ENCODE measurements at regions of chr5 and their contacts with region 1.

Region 1: DNA sequence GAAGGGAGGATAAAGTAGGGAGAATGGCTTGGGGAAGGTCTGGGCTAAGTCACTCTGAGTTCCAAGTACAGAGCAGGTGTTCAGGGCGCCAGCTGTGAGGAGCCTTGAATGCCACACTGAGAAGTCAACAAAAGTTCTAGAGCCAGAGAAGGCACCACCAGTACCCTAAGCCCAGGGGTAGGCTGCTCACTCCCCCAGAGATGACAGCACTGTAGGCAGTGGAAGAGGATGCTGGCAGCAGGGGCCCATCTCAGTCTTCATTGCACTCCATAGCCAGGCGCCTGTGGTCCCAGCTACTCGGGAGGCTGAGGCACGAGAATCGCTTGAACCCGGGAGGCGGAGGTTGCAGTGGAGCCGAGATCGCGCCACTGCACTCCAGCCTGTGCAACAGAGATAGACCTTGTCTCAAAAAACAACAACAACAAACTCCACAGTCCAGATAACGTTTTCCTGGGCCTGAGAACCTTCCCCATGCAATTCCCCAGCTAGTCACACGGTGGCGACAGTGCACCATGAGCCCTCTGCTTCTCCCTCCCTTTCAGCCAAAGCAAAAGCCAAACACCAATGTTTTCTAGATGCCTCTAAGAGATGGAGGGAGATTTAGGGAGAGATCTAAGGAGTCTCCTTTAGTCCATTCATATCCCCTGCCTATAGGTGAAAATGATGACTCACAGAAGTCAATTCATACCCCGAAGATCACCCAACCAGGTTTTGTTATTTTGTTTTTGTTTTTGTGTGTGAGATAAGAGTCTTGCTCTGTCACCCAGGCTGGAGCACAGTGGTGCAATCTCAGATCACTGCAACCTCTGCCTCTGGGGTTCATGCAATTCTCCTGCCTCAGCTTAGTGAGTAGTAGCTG is 19.8 kb upstream of the NSD1 start:
- H3K4me3 Mint-ChIP-seq: peak overlapping the region; percentile 70
- H3K27ac Mint-ChIP-seq: peak overlapping the region; percentile 84
- H3K4me1 Mint-ChIP-seq: peaks cover 38% of the 10 kb centered on the region
- H3K27me3 Mint-ChIP-seq: peaks cover 2% of the 10 kb centered on the region

Region 2: DNA sequence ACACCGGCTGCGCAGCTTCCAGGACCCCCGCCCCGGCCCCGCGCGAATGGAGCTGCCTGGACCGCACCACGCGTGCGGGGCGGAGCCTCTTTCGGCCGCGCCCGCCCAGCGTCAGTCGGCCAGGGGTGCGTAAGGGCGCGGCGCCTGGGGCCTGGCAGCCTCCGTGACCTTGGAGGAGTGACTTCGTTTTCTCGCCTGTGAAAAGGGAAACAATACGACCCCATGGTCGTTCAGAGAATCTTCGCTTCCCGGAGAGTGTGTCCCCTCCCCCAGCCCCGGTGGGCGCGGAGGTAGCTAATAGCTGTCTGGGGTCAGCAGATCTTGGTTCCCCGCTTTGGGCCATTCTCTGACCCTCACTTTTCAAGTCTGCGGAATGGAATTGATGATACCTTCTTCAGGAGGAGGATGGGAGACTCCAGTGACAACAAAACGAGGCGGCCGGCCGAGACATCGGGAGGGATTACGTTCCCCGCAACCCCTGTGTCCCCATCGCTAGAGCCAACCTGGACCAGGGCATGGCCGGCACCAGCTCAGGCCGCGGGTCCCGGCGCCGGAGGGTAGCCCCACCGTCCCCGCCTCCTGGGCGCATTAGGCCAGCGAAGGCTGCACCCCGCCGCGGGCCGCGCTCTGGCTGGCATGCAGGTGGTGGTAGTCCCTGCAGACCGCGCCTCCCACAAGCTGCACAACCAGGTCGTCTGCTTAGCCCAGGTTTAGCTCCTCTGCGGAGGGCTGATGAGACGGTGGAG is 570.2 kb before region 1 on chr5:
- intact Hi-C with region 1: no loop called
- H3K4me3 Mint-ChIP-seq: peak overlapping the region; percentile 84
- H3K27ac Mint-ChIP-seq: peak overlapping the region; percentile 94
- H3K4me1 Mint-ChIP-seq: peaks cover 58% of the 10 kb centered on the region
- H3K27me3 Mint-ChIP-seq: no peaks in the 10 kb centered on the region

Region 3: GRCh38 chr5:176660860-176661641 is 452.7 kb before region 1 on chr5:
- intact Hi-C with region 1: loop called (anchors 5 kb)
- H3K4me3 Mint-ChIP-seq: no peak overlapping the region
- H3K27ac Mint-ChIP-seq: no peak overlapping the region
- H3K4me1 Mint-ChIP-seq: peaks cover 23% of the 10 kb centered on the region
- H3K27me3 Mint-ChIP-seq: peaks cover 47% of the 10 kb centered on the region

Region 4: DNA sequence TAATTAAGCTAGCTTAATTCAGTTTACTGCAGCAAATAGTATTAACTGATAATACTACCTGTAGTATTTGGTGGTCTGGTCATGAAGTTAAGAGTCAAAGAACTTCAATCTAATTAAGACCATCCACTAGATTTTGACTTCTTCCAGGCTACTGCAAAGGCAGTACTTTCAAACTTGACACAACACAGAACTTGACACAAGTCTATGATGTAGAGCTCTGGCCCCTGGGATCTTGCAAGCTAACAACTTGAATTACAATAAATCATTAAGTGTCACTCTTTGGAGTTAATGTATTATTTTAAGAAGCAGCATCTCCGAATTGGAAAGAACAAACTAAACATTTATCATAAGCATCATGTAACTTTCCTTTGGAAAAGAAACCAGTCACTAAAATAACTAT is 148.2 kb before region 1 on chr5:
- intact Hi-C with region 1: no loop called
- H3K4me3 Mint-ChIP-seq: no peak overlapping the region
- H3K27ac Mint-ChIP-seq: no peak overlapping the region
- H3K4me1 Mint-ChIP-seq: peaks cover 3% of the 10 kb centered on the region
- H3K27me3 Mint-ChIP-seq: no peaks in the 10 kb centered on the region

Region 5: GRCh38 chr5:177133091-177133852 is 19.5 kb after region 1 on chr5 and contains the start of gene NSD1:
- intact Hi-C with region 1: loop called (anchors 2 kb)
- H3K4me3 Mint-ChIP-seq: peak within 1 kb of the TSS; percentile 81
- H3K27ac Mint-ChIP-seq: peak within 1 kb of the TSS; percentile 92
- H3K4me1 Mint-ChIP-seq: peaks cover 58% of the 10 kb centered on the region
- H3K27me3 Mint-ChIP-seq: peaks cover 5% of the 10 kb centered on the region

Region 6: GRCh38 chr5:177249761-177250526 is 136.1 kb after region 1 on chr5:
- intact Hi-C with region 1: loop called (anchors 10 kb)
- H3K4me3 Mint-ChIP-seq: no peak overlapping the region
- H3K27ac Mint-ChIP-seq: no peak overlapping the region
- H3K4me1 Mint-ChIP-seq: no peaks in the 10 kb centered on the region
- H3K27me3 Mint-ChIP-seq: no peaks in the 10 kb centered on the region

Region 7: GRCh38 chr5:177546258-177546741 is 432.5 kb after region 1 on chr5:
- intact Hi-C with region 1: no loop called
- H3K4me3 Mint-ChIP-seq: no peak overlapping the region
- H3K27ac Mint-ChIP-seq: peak overlapping the region; percentile 50
- H3K4me1 Mint-ChIP-seq: peaks cover 37% of the 10 kb centered on the region
- H3K27me3 Mint-ChIP-seq: no peaks in the 10 kb centered on the region

Measured in dendritic cell treated with granulocyte-macrophage colony-stimulating factor and Interleukin-4, amounts not matched to agents 40 ng/mL and 50 ng/mL, for 4 days (primary cell).